CD4-positive, alpha-beta T cell (primary cell): ENCODE measurements at regions of chr22 and their contacts with region 1.

Region 1: DNA sequence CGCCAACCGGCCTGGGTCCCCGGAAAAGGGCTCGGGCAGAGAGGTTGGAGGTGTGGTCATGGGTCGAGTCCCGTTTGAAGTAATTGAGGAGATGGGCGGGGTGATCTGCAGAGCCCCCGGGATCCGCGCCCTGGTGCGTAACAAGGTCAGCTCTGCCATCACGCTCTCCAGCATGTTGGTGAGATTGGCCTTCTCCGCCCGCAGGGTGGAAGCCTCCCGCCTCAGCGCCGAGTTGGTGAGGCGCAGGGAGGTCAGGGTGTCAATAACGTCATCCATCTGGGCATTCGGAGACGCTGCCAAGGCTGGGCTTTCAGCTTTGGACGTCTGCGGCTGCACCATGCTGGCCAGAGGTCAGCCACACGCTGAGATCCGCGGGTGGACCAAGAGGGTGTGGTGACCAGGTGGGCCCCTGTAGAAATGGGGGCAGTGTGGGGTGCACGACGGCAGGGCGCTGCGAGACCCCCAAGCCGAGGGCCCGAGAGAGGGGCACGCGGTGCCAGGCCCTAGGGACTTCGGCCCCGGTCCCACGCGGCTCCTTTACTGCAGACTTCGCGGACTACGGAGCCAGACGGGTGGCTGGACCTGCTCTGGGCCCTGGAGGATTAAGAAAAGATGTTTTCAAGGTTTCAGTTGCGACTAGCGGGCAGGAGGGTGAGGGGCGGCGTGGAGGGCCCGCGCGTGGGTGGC is 672 bp downstream of the RTL6 start:
- DNase-seq: peak in 3 of 14 experiments; percentile 19 to 56 (median 21)
- ATAC-seq: no peak
- H3K4me3 ChIP-seq: peak overlapping the region; percentile 52
- H3K4me3 Mint-ChIP-seq: peak overlapping the region; percentile 82
- H3K27ac ChIP-seq: no peak overlapping the region
- H3K27ac Mint-ChIP-seq: peak overlapping the region; percentile 79
- H3K4me1 ChIP-seq: peaks cover 57% of the 10 kb centered on the region
- H3K4me1 Mint-ChIP-seq: peaks cover 51% of the 10 kb centered on the region
- H3K27me3 ChIP-seq: peaks cover 0 to 7% of the 10 kb centered on the region in 2 experiments
- H3K27me3 Mint-ChIP-seq: no peaks in the 10 kb centered on the region
- CTCF ChIP-seq: no peak

Region 2: DNA sequence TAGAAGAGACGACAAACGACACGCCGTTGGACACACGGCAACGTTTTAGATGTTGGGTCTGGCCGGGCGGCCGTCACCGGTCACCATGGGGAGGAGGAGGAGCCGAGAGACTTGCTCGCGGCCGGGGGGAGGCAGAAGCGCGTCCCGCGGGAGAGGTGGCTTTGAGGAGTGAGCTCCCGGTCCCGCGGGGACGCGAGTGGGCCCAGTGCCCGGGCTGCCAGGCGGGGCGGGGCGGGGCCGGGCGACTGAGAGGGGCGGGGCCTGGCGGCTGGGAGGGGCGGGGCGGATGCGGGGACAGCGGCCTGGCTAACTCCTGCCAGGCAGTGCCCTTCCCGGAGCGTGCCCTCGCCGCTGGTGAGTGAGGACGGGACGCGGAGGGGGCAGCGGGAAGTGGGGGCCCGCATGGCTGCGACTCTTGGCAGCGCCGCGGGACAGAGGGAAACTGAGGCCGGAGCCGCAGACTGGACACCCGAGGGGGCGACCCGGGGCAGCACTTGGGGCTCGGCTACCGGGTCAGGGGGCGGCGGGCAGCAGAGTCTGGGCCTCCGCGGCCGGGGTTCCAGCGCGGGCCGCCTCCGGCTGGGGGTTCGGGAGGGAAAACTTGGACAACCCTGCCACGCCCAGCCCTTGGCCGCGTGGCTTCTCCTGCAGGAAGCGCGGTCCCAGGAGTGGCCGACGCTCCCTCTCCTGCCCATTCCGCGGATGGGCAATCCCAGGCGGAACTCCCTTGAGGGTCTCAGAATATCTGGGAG is 1345.9 kb before region 1 on chr22 and contains the start of gene TSPO:
- CTCF ChIA-PET with region 1: no interaction called
- POLR2A ChIA-PET with region 1: no interaction called
- intact Hi-C with region 1: loop called in 1 of 2 experiments (anchors 5 kb)
- DNase-seq: peak; percentile 31 to 82 (median 56)
- ATAC-seq: peak; percentile 47
- H3K4me3 ChIP-seq: peak within 1 kb of the TSS; percentile 74
- H3K4me3 Mint-ChIP-seq: peak within 1 kb of the TSS; percentile 97
- H3K27ac ChIP-seq: peak within 1 kb of the TSS; percentile 56 to 60
- H3K27ac Mint-ChIP-seq: peak within 1 kb of the TSS; percentile 87
- H3K4me1 ChIP-seq: peaks cover 46% of the 10 kb centered on the region
- H3K4me1 Mint-ChIP-seq: peaks cover 35% of the 10 kb centered on the region
- H3K27me3 ChIP-seq: no peaks in the 10 kb centered on the region
- H3K27me3 Mint-ChIP-seq: no peaks in the 10 kb centered on the region
- CTCF ChIP-seq: no peak
- total RNA-seq, gene TSPO: 43.8 to 45.6 TPM

Region 3: GRCh38 chr22:44180706-44181032 is 316.7 kb before region 1 on chr22 and contains the start of gene PARVG:
- CTCF ChIA-PET with region 1: no interaction called
- POLR2A ChIA-PET with region 1: no interaction called
- intact Hi-C with region 1: loop called in 1 of 2 experiments (anchors 5 kb)
- DNase-seq: peak in 12 of 14 experiments; percentile 19 to 84 (median 39)
- ATAC-seq: peak; percentile 58
- H3K4me3 ChIP-seq: peak within 1 kb of the TSS; percentile 88
- H3K4me3 Mint-ChIP-seq: peak within 1 kb of the TSS; percentile 85
- H3K27ac ChIP-seq: peak within 1 kb of the TSS; percentile 75 to 77
- H3K27ac Mint-ChIP-seq: peak within 1 kb of the TSS; percentile 88
- H3K4me1 ChIP-seq: peaks cover 31% of the 10 kb centered on the region
- H3K4me1 Mint-ChIP-seq: peaks cover 40% of the 10 kb centered on the region
- H3K27me3 ChIP-seq: no peaks in the 10 kb centered on the region
- H3K27me3 Mint-ChIP-seq: no peaks in the 10 kb centered on the region
- CTCF ChIP-seq: no peak
- total RNA-seq, gene PARVG: 142 to 146 TPM

Region 4: GRCh38 chr22:44620129-44620840 is 122.9 kb after region 1 on chr22:
- CTCF ChIA-PET with region 1: no interaction called
- POLR2A ChIA-PET with region 1: no interaction called
- intact Hi-C with region 1: loop called (anchors 2 to 5 kb)
- DNase-seq: peak; percentile 73 to 96 (median 82)
- ATAC-seq: peak; percentile 83
- H3K4me3 ChIP-seq: peak overlapping the region; percentile 44
- H3K4me3 Mint-ChIP-seq: no peak overlapping the region
- H3K27ac ChIP-seq: no peak overlapping the region
- H3K27ac Mint-ChIP-seq: no peak overlapping the region
- H3K4me1 ChIP-seq: peaks cover 42% of the 10 kb centered on the region
- H3K4me1 Mint-ChIP-seq: no peaks in the 10 kb centered on the region
- H3K27me3 ChIP-seq: no peaks in the 10 kb centered on the region
- H3K27me3 Mint-ChIP-seq: no peaks in the 10 kb centered on the region
- CTCF ChIP-seq: no peak

Region 5: DNA sequence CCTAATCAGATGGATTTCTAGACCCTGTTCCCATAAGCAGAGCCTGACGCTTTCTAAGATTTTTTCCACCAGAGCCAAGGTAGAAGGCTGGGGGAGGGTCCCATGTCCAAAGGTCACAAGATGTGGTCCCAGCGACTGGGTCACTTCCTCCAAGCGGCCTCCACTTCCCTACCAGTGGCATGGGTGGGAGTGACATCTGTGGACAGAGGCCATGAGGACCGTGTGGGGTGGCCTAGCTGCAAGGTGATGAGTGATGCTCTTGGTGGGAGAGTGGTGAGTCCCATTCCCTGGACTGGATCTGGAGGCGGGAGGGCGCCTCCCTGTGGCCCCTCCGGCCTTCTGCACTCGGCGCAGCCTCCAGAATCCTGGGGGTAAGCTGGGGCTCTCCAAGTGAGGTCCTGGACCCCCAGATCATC is 172.2 kb after region 1 on chr22:
- CTCF ChIA-PET with region 1: no interaction called
- POLR2A ChIA-PET with region 1: no interaction called
- intact Hi-C with region 1: loop called in 1 of 2 experiments (anchors 5 kb)
- DNase-seq: peak in 2 of 14 experiments; percentile 29 to 47
- ATAC-seq: no peak
- H3K4me3 ChIP-seq: peak overlapping the region; percentile 69
- H3K4me3 Mint-ChIP-seq: peak overlapping the region; percentile 84
- H3K27ac ChIP-seq: no peak overlapping the region
- H3K27ac Mint-ChIP-seq: peak overlapping the region; percentile 57
- H3K4me1 ChIP-seq: peaks cover 71% of the 10 kb centered on the region
- H3K4me1 Mint-ChIP-seq: peaks cover 59% of the 10 kb centered on the region
- H3K27me3 ChIP-seq: no peaks in the 10 kb centered on the region
- H3K27me3 Mint-ChIP-seq: no peaks in the 10 kb centered on the region
- CTCF ChIP-seq: no peak